Activated T-helper 1 cell treated with anti-CD3 and anti-CD28 coated beads, Interleukin-12 subunit alpha, Interleukin-12 subunit beta, Interleukin-2, Interleukin-4 antibody, amounts not matched to agents 30 ng/mL and 10 ng/mL and 1 ng/mL, durations not matched to agents 14 hours and 24 hours and 36 hours (primary cell): ENCODE measurements at regions of chr20 and their contacts with region 1.

Region 1: DNA sequence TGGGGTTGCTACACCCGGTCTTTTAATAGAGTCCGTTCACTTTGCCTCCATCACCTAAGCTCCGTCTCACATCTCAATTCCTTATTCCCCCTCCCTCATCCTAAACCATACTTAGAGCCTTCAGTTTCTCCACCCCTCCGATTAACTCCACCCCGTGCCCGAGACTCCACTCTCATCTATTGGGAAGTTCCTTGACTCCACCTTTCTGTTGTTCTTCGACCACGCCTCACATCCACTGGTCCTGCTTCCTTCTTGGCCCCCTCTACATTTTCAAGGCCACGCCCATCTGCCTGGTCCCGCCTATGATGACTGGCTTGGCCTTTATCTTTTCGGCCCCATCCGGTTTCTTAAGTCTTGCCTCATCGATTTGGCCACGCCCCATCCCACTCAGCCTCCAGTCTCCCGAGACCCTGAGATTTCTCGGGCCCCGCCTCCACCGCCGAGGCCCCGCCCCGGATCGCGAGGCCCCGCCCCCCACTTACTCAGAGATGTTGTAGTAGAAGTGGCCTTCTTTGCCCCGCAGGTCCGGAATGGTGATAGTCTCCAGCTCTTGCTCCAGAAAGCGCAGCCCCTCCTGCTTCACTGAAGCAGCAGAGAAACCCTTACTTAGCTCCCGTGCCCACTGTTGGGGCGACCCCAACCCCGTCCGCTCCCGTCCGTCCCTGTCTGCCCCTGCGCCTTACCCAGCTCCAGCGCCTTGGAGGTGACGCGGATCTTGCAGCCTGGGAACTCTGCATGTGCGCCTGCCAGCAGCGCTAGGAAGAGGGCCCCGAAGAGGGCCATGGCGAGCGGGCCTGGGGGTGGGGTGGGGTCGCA is 1.1 kb downstream of the PLTP start:
- DNase-seq: peak; percentile 81
- H3K4me3 Mint-ChIP-seq: peak overlapping the region; percentile 45
- H3K27ac Mint-ChIP-seq: peak overlapping the region; percentile 33
- H3K4me1 Mint-ChIP-seq: peaks cover 14% of the 10 kb centered on the region
- H3K27me3 Mint-ChIP-seq: peaks cover 14% of the 10 kb centered on the region

Region 2: DNA sequence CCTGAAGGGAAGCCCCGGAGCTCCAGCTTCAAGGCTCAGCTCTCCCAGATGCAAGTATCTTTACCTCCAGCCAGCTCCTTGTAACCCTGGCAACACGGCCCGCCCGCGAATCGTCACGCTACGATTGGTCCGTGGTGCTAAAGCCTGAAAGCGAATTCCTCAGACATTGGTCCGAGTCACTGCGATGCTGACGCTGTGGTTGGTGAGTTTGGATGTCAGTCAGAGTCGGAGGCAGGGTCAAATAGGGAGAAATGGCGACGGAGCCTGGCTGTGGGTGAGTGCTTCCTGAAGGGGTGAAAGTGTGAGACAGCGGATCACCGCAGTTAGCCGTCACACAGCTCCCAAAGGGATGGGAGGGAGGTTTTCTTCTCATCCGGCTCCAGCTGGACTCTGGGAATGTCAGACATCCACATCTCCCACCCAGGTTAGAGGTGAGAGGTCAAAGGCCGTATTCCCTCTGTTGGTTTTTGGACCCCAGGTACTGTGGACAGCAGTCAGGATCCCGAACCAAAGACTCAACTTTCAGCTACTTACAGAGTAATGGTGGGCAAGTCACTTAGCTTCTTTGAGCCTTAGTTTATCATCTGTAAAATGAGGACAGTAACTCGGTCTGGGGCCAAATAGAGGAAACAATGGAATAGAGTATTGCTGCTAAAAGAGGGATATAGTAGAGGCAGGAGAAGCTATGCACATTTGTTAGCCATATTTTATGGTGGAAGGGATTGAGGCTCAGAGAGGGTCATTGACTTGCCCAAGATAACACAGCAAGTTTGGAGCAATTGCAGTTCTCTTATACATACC is 29.7 kb before region 1 on chr20 and contains the start of gene ZSWIM1:
- intact Hi-C with region 1: loop called (anchors 1 kb)
- DNase-seq: peak; percentile 96
- H3K4me3 Mint-ChIP-seq: peak within 1 kb of the TSS; percentile 84
- H3K27ac Mint-ChIP-seq: peak within 1 kb of the TSS; percentile 72
- H3K4me1 Mint-ChIP-seq: peaks cover 45% of the 10 kb centered on the region
- H3K27me3 Mint-ChIP-seq: peaks cover 2% of the 10 kb centered on the region
- total RNA-seq, gene ZSWIM1: 7.5 and 7.8 TPM in 2 replicates

Region 3: DNA sequence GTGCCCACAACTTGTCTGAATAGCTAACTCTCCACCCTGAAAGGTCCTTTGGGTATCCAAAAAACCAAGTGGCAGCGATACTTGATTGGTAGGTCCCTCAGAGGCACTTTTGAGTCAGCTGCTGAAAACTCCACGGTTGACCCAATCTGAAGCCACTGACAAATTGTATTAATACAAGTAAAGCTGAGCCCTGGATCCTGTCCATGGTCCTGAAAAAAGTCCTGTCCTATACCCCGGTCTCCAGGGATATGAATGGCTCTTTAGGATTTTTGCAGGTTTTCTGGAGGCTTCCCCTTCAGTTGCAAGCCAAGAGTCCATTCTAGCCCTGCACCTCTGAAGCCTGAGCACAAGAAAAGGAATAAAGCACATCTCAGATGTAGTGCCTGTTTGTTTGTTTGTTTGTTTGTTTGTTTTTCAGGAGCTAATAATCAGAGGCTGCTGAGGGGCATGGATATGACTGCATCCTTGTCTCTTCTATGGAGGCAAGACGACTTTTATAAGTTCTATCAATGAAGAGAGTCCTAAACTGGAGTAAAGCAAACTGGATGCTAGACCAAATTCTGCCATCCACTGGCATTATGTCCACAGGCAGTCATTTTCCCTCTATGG is 116.5 kb after region 1 on chr20:
- intact Hi-C with region 1: no loop called
- DNase-seq: no peak
- H3K4me3 Mint-ChIP-seq: no peak overlapping the region
- H3K27ac Mint-ChIP-seq: no peak overlapping the region
- H3K4me1 Mint-ChIP-seq: peaks cover 10% of the 10 kb centered on the region
- H3K27me3 Mint-ChIP-seq: peaks cover 54% of the 10 kb centered on the region